ENCODE measurements at regions of chr2 and their contacts with region 1.

Region 1: GRCh38 chr2:230411570-230412370 is 4.2 kb upstream of the SP100 start:
- DNase-seq: peak; percentile 47 to 81 (median 61)
- ATAC-seq: peak; percentile 80
- H3K4me3 ChIP-seq: peak overlapping the region; percentile 96
- H3K4me3 Mint-ChIP-seq: peak overlapping the region; percentile 94 to 100 (median 100)
- H3K27ac ChIP-seq: peak overlapping the region; percentile 85
- H3K27ac Mint-ChIP-seq: peak overlapping the region; percentile 97 to 100 (median 99)
- H3K4me1 ChIP-seq: peaks cover 26 to 29% of the 10 kb centered on the region in 2 donors
- H3K4me1 Mint-ChIP-seq: peaks cover 30 to 92% (median 84%) of the 10 kb centered on the region in 7 donors
- H3K27me3 ChIP-seq: no peaks in the 10 kb centered on the region
- H3K27me3 Mint-ChIP-seq: no peaks in the 10 kb centered on the region

Region 2: DNA sequence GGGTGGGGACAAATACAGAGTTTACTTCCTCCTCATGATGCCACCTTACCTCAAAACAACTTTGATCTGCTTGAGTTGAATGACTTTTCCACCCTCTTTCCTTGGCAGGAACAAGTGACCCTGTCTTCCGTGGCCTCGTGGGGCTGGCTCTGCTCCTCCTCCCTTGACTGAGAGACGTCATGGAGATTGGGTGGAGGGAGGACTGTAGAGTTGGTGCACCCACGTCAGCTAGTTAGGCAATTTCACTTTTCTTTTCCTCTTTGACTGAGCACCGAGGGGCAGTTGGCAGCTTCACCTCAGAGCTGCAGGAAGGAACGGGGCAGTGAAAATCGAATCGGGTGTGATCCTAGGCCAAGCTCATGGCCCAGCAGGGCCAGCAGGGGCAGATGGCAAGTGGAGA is 186.3 kb before region 1 on chr2 and contains the start of gene SP140:
- CTCF ChIA-PET with region 1: no interaction called
- POLR2A ChIA-PET with region 1: interaction called, 3 read pairs
- intact Hi-C with region 1: loop called in 1 of 2 experiments (anchors 1 kb)
- DNase-seq: peak; percentile 34 to 91 (median 77)
- ATAC-seq: peak; percentile 97
- H3K4me3 ChIP-seq: peak within 1 kb of the TSS; percentile 70
- H3K4me3 Mint-ChIP-seq: peak within 1 kb of the TSS; percentile 82 to 94 (median 87)
- H3K27ac ChIP-seq: peak within 1 kb of the TSS; percentile 79
- H3K27ac Mint-ChIP-seq: peak within 1 kb of the TSS; percentile 95 to 100 (median 98)
- H3K4me1 ChIP-seq: peaks cover 21 to 39% of the 10 kb centered on the region in 2 donors
- H3K4me1 Mint-ChIP-seq: peaks cover 28 to 79% (median 65%) of the 10 kb centered on the region in 7 donors
- H3K27me3 ChIP-seq: no peaks in the 10 kb centered on the region
- H3K27me3 Mint-ChIP-seq: no peaks in the 10 kb centered on the region
- total RNA-seq, gene SP140: 34.5 to 120 (median 45.2) TPM

Region 3: GRCh38 chr2:230423851-230424458 is 12.2 kb after region 1 on chr2:
- CTCF ChIA-PET with region 1: no interaction called
- POLR2A ChIA-PET with region 1: interaction called, 16 read pairs
- intact Hi-C with region 1: loop called (anchors 1 kb)
- DNase-seq: no peak
- ATAC-seq: no peak
- H3K4me3 ChIP-seq: no peak overlapping the region
- H3K4me3 Mint-ChIP-seq: peak overlapping the region; percentile 12 to 100 (median 75)
- H3K27ac ChIP-seq: no peak overlapping the region
- H3K27ac Mint-ChIP-seq: peak overlapping the region; percentile 33 to 87 (median 71)
- H3K4me1 ChIP-seq: peaks cover 50 to 66% of the 10 kb centered on the region in 2 donors
- H3K4me1 Mint-ChIP-seq: peaks cover 62 to 94% (median 88%) of the 10 kb centered on the region in 7 donors
- H3K27me3 ChIP-seq: no peaks in the 10 kb centered on the region
- H3K27me3 Mint-ChIP-seq: no peaks in the 10 kb centered on the region

Region 4: GRCh38 chr2:230472621-230473018 is 60.9 kb after region 1 on chr2:
- CTCF ChIA-PET with region 1: interaction called, 4 read pairs
- POLR2A ChIA-PET with region 1: interaction called, 3 read pairs
- intact Hi-C with region 1: loop called in 1 of 2 experiments (anchors 2 kb)
- DNase-seq: peak in 1 of 9 donors; percentile 39
- ATAC-seq: peak; percentile 74
- H3K4me3 ChIP-seq: no peak overlapping the region
- H3K4me3 Mint-ChIP-seq: peak overlapping the region in 8 of 10 donors; percentile 12 to 62 (median 30)
- H3K27ac ChIP-seq: peak overlapping the region; percentile 48
- H3K27ac Mint-ChIP-seq: peak overlapping the region; percentile 45 to 92 (median 83)
- H3K4me1 ChIP-seq: peaks cover 10 to 24% of the 10 kb centered on the region in 2 donors
- H3K4me1 Mint-ChIP-seq: peaks cover 22 to 60% (median 52%) of the 10 kb centered on the region in 7 donors
- H3K27me3 ChIP-seq: no peaks in the 10 kb centered on the region
- H3K27me3 Mint-ChIP-seq: no peaks in the 10 kb centered on the region

Region 5: DNA sequence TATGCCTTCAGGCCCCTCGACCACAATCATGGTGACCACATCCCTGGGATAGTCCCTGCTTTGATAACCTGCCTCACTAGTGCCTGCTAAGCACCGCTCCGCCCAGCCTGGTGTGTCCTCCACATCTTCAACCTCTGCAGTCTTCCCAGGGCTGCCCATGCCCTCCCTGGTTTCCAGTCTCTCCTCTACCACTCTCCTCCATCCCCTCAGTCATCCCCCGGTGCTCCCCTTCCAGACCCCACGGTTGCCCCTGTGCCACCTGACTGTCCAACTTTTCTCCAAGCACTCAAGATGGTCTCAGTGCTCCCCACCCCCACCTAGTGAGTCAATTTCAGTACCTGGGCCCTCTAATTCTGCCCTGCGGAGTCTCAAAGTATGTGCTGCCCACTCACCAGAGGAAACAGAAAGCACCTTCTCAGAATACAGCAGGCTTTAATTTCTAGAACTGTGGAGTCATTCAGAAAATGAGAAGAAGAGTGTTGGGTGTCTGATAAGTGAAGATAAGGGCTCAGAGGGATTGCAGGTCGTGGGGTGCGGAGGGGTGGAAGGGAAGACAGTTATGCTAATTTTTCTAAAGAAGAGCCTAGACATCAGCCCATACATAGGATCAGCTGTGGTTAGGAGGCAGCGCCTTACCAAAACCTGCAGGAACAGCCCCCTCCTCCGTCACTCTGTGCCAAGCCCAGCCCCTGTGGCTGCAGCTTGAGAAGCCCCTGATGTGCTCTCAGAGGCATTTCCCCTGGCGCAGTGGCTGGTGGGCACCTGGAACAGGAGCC is 247.3 kb after region 1 on chr2:
- CTCF ChIA-PET with region 1: no interaction called
- POLR2A ChIA-PET with region 1: no interaction called
- intact Hi-C with region 1: loop called in 1 of 2 experiments (anchors 1 kb)
- DNase-seq: peak in 5 of 9 donors; percentile 17 to 69 (median 28)
- ATAC-seq: peak; percentile 47
- H3K4me3 ChIP-seq: no peak overlapping the region
- H3K4me3 Mint-ChIP-seq: peak overlapping the region; percentile 42 to 92 (median 74)
- H3K27ac ChIP-seq: peak overlapping the region; percentile 48
- H3K27ac Mint-ChIP-seq: peak overlapping the region; percentile 63 to 98 (median 84)
- H3K4me1 ChIP-seq: peaks cover 62 to 64% of the 10 kb centered on the region in 2 donors
- H3K4me1 Mint-ChIP-seq: peaks cover 62 to 88% (median 87%) of the 10 kb centered on the region in 7 donors
- H3K27me3 ChIP-seq: no peaks in the 10 kb centered on the region
- H3K27me3 Mint-ChIP-seq: no peaks in the 10 kb centered on the region

Region 6: DNA sequence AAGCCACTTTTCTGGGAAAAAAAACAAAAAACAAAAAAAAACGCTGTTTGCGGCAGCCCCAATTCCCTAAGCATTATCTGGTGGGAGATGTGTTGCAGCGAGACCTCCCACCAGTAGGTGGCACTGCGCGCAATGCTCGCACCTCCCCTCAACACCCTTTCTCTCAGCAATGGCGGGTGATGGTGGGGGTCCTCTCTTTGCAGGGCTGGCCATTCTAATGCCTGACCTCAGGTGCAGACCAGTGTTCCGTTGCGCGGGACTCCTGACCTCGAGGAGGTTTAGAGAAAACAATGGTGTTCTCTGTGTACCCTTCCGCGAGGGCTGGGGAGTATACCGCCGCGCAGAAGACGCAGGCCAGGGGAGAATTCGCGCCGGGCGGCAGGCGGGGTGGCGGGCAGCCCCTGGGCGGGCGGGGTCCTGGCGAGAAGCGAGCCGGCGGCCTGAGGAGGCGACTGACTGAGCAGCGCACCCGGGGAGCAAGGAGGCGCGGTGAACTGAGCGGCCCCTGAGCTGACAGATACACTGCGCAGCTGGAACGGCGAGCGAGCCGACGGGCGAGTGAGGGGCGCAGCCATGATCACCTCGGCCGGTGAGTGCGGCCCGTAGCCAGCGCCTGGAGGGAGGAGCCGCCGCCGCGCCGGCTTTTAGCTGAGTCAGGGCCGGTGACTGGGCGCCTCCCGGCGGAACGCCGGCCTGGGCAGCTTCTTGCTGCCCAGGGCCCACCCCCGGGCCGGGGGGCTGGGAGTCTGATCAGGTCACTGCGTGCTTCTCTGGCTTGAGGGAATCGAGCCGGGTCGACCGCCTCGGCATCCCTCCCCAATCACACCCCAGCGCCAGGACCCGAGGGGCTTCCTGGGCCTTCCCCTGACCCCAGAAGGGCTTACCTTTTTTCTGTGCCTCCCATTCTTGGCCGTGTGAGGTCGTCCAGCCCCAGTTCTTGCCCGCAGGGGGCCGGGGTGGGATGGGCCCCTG is 645.0 kb after region 1 on chr2 and contains the start of gene PSMD1:
- CTCF ChIA-PET with region 1: no interaction called
- POLR2A ChIA-PET with region 1: no interaction called
- intact Hi-C with region 1: loop called in 1 of 2 experiments (anchors 10 kb)
- DNase-seq: peak; percentile 89 to 98 (median 96)
- ATAC-seq: peak; percentile 96
- H3K4me3 ChIP-seq: peak within 1 kb of the TSS; percentile 70
- H3K4me3 Mint-ChIP-seq: peak within 1 kb of the TSS; percentile 96 to 99 (median 99)
- H3K27ac ChIP-seq: peak within 1 kb of the TSS; percentile 91
- H3K27ac Mint-ChIP-seq: peak within 1 kb of the TSS; percentile 99 to 100 (median 100)
- H3K4me1 ChIP-seq: peaks cover 18 to 23% of the 10 kb centered on the region in 2 donors
- H3K4me1 Mint-ChIP-seq: peaks cover 33 to 62% (median 51%) of the 10 kb centered on the region in 7 donors
- H3K27me3 ChIP-seq: no peaks in the 10 kb centered on the region
- H3K27me3 Mint-ChIP-seq: peaks cover 0 to 11% (median 7%) of the 10 kb centered on the region in 5 donors
- total RNA-seq, gene PSMD1: 30.3 to 121 (median 40.1) TPM

Measured in naive thymus-derived CD4-positive, alpha-beta T cell (primary cell).